Posterior vena cava (tissue), 2 donors: ENCODE measurements at regions of chr12 and their contacts with region 1.

Region 1: GRCh38 chr12:48069241-48069640 is 36.6 kb downstream of the SENP1 start:
- DNase-seq: no peak

Region 2: GRCh38 chr12:47963340-47964040 is 105.8 kb before region 1 on chr12 and contains the start of gene TMEM106C:
- intact Hi-C with region 1: no loop called
- DNase-seq: peak; percentile 98
- total RNA-seq, gene TMEM106C: 29.5 to 36.1 TPM

Region 3: GRCh38 chr12:48045965-48046518 is 23.2 kb before region 1 on chr12:
- intact Hi-C with region 1: loop called in 1 of 2 experiments (anchors 1 kb)
- DNase-seq: no peak

Region 4: DNA sequence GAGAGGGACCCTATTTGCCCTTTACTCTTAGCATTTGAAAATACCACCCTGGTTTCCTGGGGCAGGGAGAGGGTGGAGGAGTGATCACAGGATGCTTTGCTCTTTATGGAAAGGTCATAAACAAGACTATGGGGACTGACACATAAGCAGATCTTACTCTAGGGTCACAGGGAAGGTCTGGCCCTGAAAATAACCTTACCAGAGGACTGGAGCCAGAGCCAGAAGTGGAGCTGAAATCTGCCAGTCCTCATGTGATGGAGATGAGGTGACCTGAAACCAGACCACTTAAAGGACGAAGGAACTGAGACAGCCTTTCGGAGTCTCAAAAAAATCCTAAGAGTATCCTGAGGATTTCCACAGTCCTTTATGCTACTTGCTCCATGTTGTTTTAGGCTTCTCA is 62.3 kb after region 1 on chr12:
- intact Hi-C with region 1: no loop called
- DNase-seq: no peak